ENCODE measurements at regions of chrX and their contacts with region 1.

Region 1: GRCh38 chrX:69538321-69538876 is 34.3 kb downstream of the NALF2 start:
- DNase-seq: no peak
- ATAC-seq: peak; percentile 97
- H3K4me3 ChIP-seq: peak overlapping the region; percentile 34 to 52
- H3K27ac ChIP-seq: no peak overlapping the region
- H3K4me1 ChIP-seq: no peaks in the 10 kb centered on the region
- H3K27me3 ChIP-seq: no peaks in the 10 kb centered on the region; the same call in 1 of the 2 replicates
- CTCF ChIP-seq: peak; percentile 86

Region 2: DNA sequence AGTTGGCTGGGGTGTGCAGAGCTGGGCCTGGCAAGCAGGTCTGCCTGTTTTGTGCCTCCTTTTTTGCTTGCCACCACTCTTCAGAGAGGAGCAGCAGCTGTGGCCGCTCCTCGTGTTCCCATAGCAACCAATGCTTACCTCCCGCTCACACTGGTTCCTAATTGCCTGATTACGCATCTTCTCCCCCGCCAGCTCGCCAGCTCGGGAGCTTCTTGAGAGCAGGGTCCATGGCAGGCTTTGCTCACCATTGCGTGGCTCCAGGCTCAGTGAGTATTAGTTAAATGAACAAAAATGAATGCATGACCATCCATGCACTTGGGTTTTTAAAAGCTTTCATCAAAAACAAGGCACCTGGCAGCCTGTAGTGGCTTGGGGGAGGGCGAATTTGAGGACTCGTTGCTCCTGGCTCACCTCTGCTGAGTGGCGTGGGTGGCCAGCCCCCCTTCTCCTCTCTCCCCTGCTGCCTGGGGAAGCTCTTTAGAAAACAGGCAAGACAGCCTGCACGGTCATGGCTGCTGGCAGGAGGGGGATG is 359.0 kb before region 1 on chrX:
- CTCF ChIA-PET with region 1: no interaction called
- POLR2A ChIA-PET with region 1: no interaction called
- in situ Hi-C with region 1: no loop called
- intact Hi-C with region 1: no loop called
- DNase-seq: no peak
- ATAC-seq: no peak
- H3K4me3 ChIP-seq: no peak overlapping the region
- H3K27ac ChIP-seq: no peak overlapping the region
- H3K4me1 ChIP-seq: no peaks in the 10 kb centered on the region
- H3K27me3 ChIP-seq: no peaks in the 10 kb centered on the region
- CTCF ChIP-seq: no peak

Region 3: DNA sequence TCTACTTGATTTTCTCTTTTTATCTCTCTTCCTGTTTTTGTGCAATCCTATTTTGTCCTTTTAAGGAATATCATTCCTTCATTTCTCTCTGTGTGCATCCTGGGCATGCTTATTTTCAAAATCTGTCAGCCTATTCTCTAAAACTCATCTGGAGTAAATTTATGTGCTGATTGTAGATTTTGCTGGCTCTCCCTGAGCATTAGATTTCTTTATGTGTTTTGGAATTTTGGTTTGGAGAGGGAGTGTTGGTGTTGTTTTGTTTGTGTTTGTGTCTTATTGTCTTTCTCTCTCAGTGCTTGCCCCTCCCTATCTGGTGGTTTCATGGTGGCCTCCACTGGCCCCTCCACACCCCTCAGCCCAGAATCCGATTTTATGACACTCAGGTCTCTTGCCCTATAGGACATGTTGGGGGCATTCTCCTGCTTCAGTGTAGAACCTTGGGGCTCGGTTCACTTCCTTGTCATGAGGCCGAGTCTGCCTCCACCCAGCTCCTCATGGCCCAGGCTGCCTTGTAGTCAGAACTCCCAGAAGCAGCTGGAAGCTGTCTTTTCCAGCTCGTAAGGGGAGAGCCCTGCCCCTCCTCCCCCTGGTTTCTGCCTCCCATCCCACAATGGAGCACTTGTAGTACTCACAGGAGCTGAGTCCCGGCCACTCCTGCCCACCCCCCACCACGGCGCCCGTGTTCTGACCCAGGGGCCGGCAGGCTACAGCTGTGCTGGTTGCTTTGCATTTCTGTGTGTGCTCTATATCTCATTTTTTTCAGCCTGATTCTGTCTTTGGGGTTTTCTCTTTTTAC is 348.6 kb before region 1 on chrX:
- CTCF ChIA-PET with region 1: no interaction called
- POLR2A ChIA-PET with region 1: no interaction called
- in situ Hi-C with region 1: no loop called
- intact Hi-C with region 1: no loop called
- DNase-seq: no peak
- ATAC-seq: no peak
- H3K4me3 ChIP-seq: no peak overlapping the region
- H3K27ac ChIP-seq: no peak overlapping the region
- H3K4me1 ChIP-seq: no peaks in the 10 kb centered on the region
- H3K27me3 ChIP-seq: no peaks in the 10 kb centered on the region
- CTCF ChIP-seq: no peak

Region 4: GRCh38 chrX:69493193-69493592 is 45.2 kb before region 1 on chrX:
- CTCF ChIA-PET with region 1: no interaction called
- POLR2A ChIA-PET with region 1: no interaction called
- in situ Hi-C with region 1: no loop called
- intact Hi-C with region 1: no loop called
- DNase-seq: no peak
- ATAC-seq: peak; percentile 60; the same call in 1 of the 2 replicates
- H3K4me3 ChIP-seq: no peak overlapping the region
- H3K27ac ChIP-seq: no peak overlapping the region
- H3K4me1 ChIP-seq: no peaks in the 10 kb centered on the region
- H3K27me3 ChIP-seq: 0 out of 2 replicates have a peak, but pooled peaks cover 2% of the 10 kb centered on the region
- CTCF ChIP-seq: peak; percentile 63

Region 5: GRCh38 chrX:69615779-69616456 is 77.5 kb after region 1 on chrX and contains the start of gene EDA:
- CTCF ChIA-PET with region 1: interaction called, 3 read pairs
- POLR2A ChIA-PET with region 1: interaction called, 3 read pairs
- in situ Hi-C with region 1: no loop called
- intact Hi-C with region 1: loop called (anchors 5 kb)
- DNase-seq: no peak
- ATAC-seq: peak; percentile 97
- H3K4me3 ChIP-seq: peak within 1 kb of the TSS; percentile 37 to 46
- H3K27ac ChIP-seq: no peak within 1 kb of the TSS
- H3K4me1 ChIP-seq: no peaks in the 10 kb centered on the region; the same call in 1 of the 2 replicates
- H3K27me3 ChIP-seq: peaks cover 3% of the 10 kb centered on the region; the same call in 1 of the 2 replicates
- CTCF ChIP-seq: no peak
- total RNA-seq, gene EDA: 0.23 TPM

Measured in Panc1 (cell line).